GM10248 (cell line): ENCODE measurements at regions of chr5 and their contacts with region 1.

Region 1: GRCh38 chr5:164504141-164504772 is 998.8 kb downstream of the MAT2B start:
- DNase-seq: peak; percentile 21
- CTCF ChIP-seq: peak; percentile 79

Region 2: GRCh38 chr5:163564321-163564938 is 939.8 kb before region 1 on chr5:
- CTCF ChIA-PET with region 1: interaction called, 34 read pairs
- POLR2A ChIA-PET with region 1: no interaction called
- DNase-seq: peak; percentile 55
- CTCF ChIP-seq: peak; percentile 88

Region 3: DNA sequence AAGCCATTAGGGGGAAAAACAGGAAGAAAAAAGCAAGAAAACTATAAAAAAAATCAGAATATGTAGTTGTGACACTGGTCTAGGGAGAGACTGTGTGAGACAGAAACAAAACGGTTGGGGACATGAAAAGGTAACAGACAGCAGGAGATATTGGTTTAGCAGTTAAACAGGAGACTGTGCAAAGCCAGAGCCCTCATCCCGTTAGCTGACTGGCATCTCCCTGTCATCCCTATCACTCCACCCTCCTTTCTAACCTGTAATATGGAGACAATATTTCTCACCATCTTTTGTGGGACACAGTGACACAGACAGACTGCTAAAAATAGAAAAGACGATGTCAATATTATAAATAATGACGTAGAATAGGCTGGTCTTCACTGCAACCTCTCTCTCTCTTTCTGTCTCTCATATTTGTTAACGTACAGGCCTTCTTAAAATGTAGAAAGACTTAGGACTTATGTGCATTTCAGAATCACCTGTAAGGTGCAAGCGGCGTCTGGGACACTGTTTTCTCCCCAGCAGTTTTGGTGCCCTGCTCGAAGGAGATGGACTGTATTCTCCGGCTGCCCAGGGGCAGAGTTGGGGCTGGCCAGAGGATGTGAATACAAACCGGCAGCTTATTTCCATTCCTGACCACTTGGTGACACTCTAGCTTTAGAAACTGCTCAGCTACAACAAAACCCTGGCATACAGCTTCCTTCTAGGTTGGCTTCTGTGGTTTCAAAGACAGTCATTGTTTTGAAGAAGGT is 808.3 kb before region 1 on chr5:
- CTCF ChIA-PET with region 1: interaction called, 16 read pairs
- POLR2A ChIA-PET with region 1: no interaction called
- DNase-seq: peak; percentile 20
- CTCF ChIP-seq: peak; percentile 57

Region 4: GRCh38 chr5:164013077-164013670 is 491.1 kb before region 1 on chr5:
- CTCF ChIA-PET with region 1: interaction called, 15 read pairs
- POLR2A ChIA-PET with region 1: no interaction called
- DNase-seq: peak; percentile 24
- CTCF ChIP-seq: peak; percentile 59

Region 5: DNA sequence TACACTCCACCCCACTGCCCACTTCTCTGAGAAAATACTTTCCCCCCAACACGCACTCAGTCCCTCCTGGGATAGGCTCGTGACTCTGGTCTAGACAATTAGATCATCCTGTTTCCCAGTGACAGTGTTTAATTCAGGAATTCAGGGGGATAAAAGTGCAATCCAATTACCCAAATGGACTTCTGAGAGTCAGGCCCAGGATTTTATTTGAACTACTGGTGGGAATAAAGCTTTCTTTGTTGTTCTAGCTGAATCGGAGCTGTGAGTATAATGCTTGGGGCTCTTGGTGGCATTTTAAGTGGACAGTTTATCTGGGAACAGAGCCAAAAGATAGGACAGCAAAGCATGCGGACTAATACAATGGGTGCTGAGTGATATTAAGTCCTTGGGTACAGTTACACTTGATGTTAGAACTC is 315.5 kb before region 1 on chr5:
- CTCF ChIA-PET with region 1: no interaction called
- POLR2A ChIA-PET with region 1: no interaction called
- DNase-seq: no peak
- CTCF ChIP-seq: no peak

Region 6: DNA sequence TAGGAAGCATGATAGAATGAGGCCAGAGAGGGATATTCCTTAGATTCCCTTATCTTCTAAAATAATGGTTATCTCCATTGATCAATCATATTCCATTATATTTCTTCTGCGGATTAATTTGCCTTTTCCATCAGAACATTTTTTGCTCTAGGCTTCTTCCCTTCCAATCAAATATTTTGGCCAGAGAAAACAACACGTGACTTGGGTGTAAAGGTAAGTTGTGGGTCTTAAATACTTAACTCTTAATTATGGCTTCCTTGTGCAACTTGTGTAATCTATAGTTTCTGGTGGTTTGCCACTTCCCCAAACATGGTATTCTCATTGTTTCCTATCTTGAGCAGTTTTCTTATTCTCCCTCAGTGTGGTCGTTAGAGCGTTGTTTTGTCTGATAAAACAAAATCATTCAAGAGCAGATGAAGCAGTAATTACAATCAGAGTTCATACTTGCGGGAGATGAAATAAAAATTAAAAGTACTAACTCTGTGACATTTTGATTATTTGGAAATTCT is 109.5 kb before region 1 on chr5:
- CTCF ChIA-PET with region 1: no interaction called
- POLR2A ChIA-PET with region 1: no interaction called
- DNase-seq: no peak
- CTCF ChIP-seq: no peak

Region 7: DNA sequence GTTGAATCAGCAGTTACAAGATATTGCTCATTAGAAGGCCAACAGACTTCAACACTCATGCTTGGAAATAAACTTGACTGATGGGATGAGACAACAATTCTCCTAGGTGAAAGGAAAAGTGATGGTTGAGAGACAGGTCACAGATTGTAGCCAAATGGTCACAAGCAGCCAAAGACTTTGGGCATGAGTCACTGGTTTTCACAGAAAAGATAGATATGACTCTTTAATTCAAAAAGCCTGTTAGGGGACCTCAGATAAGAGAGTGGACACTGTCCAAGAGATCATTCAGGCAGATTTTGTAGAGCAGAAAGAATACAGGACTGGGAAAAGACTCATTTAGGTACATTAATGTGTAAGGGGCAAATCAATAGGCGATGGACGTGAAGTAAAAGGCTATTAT is 16.3 kb before region 1 on chr5:
- CTCF ChIA-PET with region 1: interaction called, 11 read pairs
- POLR2A ChIA-PET with region 1: no interaction called
- DNase-seq: no peak
- CTCF ChIP-seq: no peak

Region 8: GRCh38 chr5:164518052-164518740 is 13.9 kb after region 1 on chr5:
- CTCF ChIA-PET with region 1: interaction called, 19 read pairs
- POLR2A ChIA-PET with region 1: no interaction called
- DNase-seq: no peak
- CTCF ChIP-seq: no peak

Region 9: GRCh38 chr5:164763206-164763605 is 258.9 kb after region 1 on chr5:
- CTCF ChIA-PET with region 1: no interaction called
- POLR2A ChIA-PET with region 1: no interaction called
- DNase-seq: no peak
- CTCF ChIP-seq: no peak